Activated B cell treated with CpG ODN at 0.5 μM for 24 hours (primary cell): ENCODE measurements at regions of chr9 and their contacts with region 1.

Region 1: GRCh38 chr9:98132806-98133631 is 14.0 kb upstream of the TRIM14 start:
- DNase-seq: no peak
- ATAC-seq: no peak
- H3K4me3 Mint-ChIP-seq: no peak overlapping the region
- H3K27ac Mint-ChIP-seq: no peak overlapping the region
- H3K4me1 Mint-ChIP-seq: peaks cover 24% of the 10 kb centered on the region
- H3K27me3 Mint-ChIP-seq: no peaks in the 10 kb centered on the region
- CTCF ChIP-seq: no peak

Region 2: GRCh38 chr9:98168941-98169488 is 36.0 kb after region 1 on chr9:
- CTCF ChIA-PET with region 1: no interaction called
- POLR2A ChIA-PET with region 1: no interaction called
- intact Hi-C with region 1: loop called (anchors 5 kb)
- DNase-seq: peak; percentile 24
- ATAC-seq: peak; percentile 93
- H3K4me3 Mint-ChIP-seq: no peak overlapping the region
- H3K27ac Mint-ChIP-seq: peak overlapping the region; percentile 77
- H3K4me1 Mint-ChIP-seq: peaks cover 7% of the 10 kb centered on the region
- H3K27me3 Mint-ChIP-seq: no peaks in the 10 kb centered on the region
- CTCF ChIP-seq: no peak